AG04449 (cell line): ENCODE measurements at regions of chr5 and their contacts with region 1.

Region 1: GRCh38 chr5:145495741-145496140 is 339.4 kb downstream of the PRELID2 start:
- DNase-seq: peak; percentile 76
- H3K4me3 ChIP-seq: no peak overlapping the region
- CTCF ChIP-seq: no peak

Region 2: GRCh38 chr5:145484158-145484557 is 11.6 kb before region 1 on chr5:
- CTCF ChIA-PET with region 1: interaction called, 13 read pairs
- POLR2A ChIA-PET with region 1: interaction called, 3 read pairs
- DNase-seq: peak; percentile 38
- H3K4me3 ChIP-seq: no peak overlapping the region
- CTCF ChIP-seq: no peak

Region 3: DNA sequence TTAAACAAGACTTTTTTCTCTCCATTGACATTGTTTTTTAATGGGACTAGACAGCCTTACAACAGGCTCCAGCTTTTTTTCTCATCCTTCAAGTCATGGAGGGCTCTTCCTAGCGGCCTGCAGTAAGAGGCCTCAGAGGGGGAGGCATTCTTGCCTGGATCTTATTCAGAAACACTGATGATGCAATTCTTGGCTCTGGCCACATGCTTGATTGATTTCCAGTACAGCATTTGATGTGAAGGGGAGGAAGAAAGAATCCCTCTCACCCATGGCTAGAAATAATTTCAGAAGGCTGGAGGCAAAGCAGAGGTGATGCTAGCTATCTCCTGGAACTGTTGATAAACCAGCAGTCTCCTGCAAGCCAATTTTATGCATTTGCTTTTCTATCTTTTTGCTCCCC is 14.6 kb after region 1 on chr5:
- CTCF ChIA-PET with region 1: interaction called, 15 read pairs
- POLR2A ChIA-PET with region 1: interaction called, 4 read pairs
- DNase-seq: no peak
- H3K4me3 ChIP-seq: no peak overlapping the region
- CTCF ChIP-seq: no peak